Transverse colon (tissue), 4 donors: ENCODE measurements at regions of chr4 and their contacts with region 1.

Region 1: GRCh38 chr4:151362404-151363164 is 37.2 kb upstream of the SH3D19 start:
- DNase-seq: peak; percentile 85
- H3K4me3 ChIP-seq: no peak overlapping the region
- H3K27ac ChIP-seq: peak overlapping the region in 1 of 4 donors; percentile 4
- H3K4me1 ChIP-seq: peaks cover 0 to 18% (median 7%) of the 10 kb centered on the region in 4 donors
- H3K27me3 ChIP-seq: no peaks in the 10 kb centered on the region
- CTCF ChIP-seq: peak; percentile 96 to 98 (median 96)
- EP300 ChIP-seq: no peak
- POLR2A ChIP-seq: no peak

Region 2: GRCh38 chr4:151117371-151117962 is 245.1 kb before region 1 on chr4:
- in situ Hi-C with region 1: loop called in 2 of 4 experiments (anchors 25 kb)
- intact Hi-C with region 1: loop called (anchors 5 kb)
- DNase-seq: peak; percentile 63
- H3K4me3 ChIP-seq: no peak overlapping the region
- H3K27ac ChIP-seq: peak overlapping the region in 1 of 4 donors; percentile 14
- H3K4me1 ChIP-seq: no peaks in the 10 kb centered on the region
- H3K27me3 ChIP-seq: no peaks in the 10 kb centered on the region
- CTCF ChIP-seq: peak; percentile 55 to 72 (median 63)
- EP300 ChIP-seq: no peak
- POLR2A ChIP-seq: no peak

Region 3: DNA sequence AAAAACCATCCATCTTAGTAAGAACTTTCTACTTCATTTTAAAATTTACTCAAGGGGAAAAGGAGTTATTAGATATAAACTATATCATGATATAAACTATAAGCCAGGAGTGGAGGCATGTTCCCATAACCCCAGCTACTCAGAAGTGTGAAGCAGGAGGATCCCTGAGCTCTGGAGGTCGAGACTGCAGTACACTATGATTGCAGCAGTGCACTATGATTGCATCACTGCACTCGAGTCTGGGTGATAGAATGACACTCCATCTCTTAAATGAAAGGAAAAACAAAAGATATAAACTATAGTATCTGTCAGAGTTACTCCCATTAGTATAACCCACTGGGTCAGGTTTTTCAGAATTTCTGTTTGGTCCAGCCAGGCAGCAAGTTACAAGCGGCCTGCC is 215.6 kb before region 1 on chr4:
- in situ Hi-C with region 1: loop called in 1 of 4 experiments (anchors 25 kb)
- intact Hi-C with region 1: no loop called
- DNase-seq: no peak
- H3K4me3 ChIP-seq: no peak overlapping the region
- H3K27ac ChIP-seq: no peak overlapping the region
- H3K4me1 ChIP-seq: no peaks in the 10 kb centered on the region
- H3K27me3 ChIP-seq: no peaks in the 10 kb centered on the region
- CTCF ChIP-seq: no peak
- EP300 ChIP-seq: no peak
- POLR2A ChIP-seq: no peak

Region 4: GRCh38 chr4:151251603-151252304 is 110.8 kb before region 1 on chr4:
- in situ Hi-C with region 1: loop called in 1 of 4 experiments (anchors 25 kb)
- intact Hi-C with region 1: no loop called
- DNase-seq: no peak
- H3K4me3 ChIP-seq: no peak overlapping the region
- H3K27ac ChIP-seq: no peak overlapping the region
- H3K4me1 ChIP-seq: peaks cover 0 to 9% (median 0%) of the 10 kb centered on the region in 4 donors
- H3K27me3 ChIP-seq: no peaks in the 10 kb centered on the region
- CTCF ChIP-seq: no peak
- EP300 ChIP-seq: no peak
- POLR2A ChIP-seq: no peak

Region 5: GRCh38 chr4:151276787-151277562 is 85.6 kb before region 1 on chr4 and contains the start of gene PRSS48:
- in situ Hi-C with region 1: loop called in 1 of 4 experiments (anchors 25 kb)
- intact Hi-C with region 1: loop called (anchors 10 kb)
- DNase-seq: peak; percentile 77
- H3K4me3 ChIP-seq: no peak within 1 kb of the TSS
- H3K27ac ChIP-seq: no peak within 1 kb of the TSS
- H3K4me1 ChIP-seq: peaks cover 0 to 19% (median 5%) of the 10 kb centered on the region in 4 donors
- H3K27me3 ChIP-seq: no peaks in the 10 kb centered on the region
- CTCF ChIP-seq: peak; percentile 59 to 78 (median 70)
- EP300 ChIP-seq: no peak
- POLR2A ChIP-seq: no peak
- total RNA-seq, gene PRSS48: not detected

Region 6: GRCh38 chr4:151841107-151841506 is 478.5 kb after region 1 on chr4:
- in situ Hi-C with region 1: no loop called
- intact Hi-C with region 1: no loop called
- DNase-seq: no peak
- H3K4me3 ChIP-seq: no peak overlapping the region
- H3K27ac ChIP-seq: no peak overlapping the region
- H3K4me1 ChIP-seq: no peaks in the 10 kb centered on the region
- H3K27me3 ChIP-seq: no peaks in the 10 kb centered on the region
- CTCF ChIP-seq: no peak
- EP300 ChIP-seq: no peak
- POLR2A ChIP-seq: no peak